Naive thymus-derived CD4-positive, alpha-beta T cell (primary cell): ENCODE measurements at regions of chr13 and their contacts with region 1.

Region 1: DNA sequence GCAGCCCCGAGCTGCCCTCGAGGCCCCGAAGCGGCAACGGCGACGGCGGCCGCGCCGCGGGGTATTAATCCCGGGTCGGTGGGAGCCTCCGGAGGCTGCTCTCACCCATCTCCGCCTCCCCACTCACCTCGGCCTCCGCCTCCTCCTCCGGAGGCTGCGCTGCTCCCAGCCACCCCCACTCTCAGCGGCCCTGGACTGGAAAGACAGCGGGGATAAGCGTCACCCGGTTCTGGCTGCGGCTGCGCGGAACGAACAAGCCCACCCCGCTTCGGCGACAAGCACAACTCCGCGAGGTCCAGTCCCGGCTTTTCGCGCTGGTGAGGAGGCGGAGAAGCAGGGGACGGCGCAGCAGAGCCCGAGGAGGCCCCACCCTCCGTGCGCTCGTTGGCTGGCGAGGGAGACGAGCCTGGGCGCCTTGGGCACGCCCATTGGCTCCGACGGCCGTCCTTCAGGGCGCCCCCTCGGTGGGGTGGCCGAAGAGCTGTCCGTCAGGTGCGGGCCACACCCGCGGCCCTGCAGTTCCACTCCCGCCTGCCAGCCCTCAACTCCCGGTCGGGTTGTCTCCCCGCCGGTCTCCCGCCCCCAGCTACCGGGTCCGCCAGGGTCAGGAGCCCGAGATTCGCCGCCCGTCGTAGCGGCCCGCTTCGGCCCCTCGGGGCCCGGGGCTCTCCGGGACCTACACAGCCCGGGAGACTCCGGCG is at the start of gene ZMYM5:
- DNase-seq: peak; percentile 87 to 96 (median 90)
- ATAC-seq: peak; percentile 89
- H3K4me3 ChIP-seq: peak within 1 kb of the TSS; percentile 80
- H3K4me3 Mint-ChIP-seq: peak within 1 kb of the TSS; percentile 85 to 98 (median 97)
- H3K27ac ChIP-seq: peak within 1 kb of the TSS; percentile 84
- H3K27ac Mint-ChIP-seq: peak within 1 kb of the TSS; percentile 90 to 98 (median 97)
- H3K4me1 ChIP-seq: peaks cover 22 to 23% of the 10 kb centered on the region in 2 donors
- H3K4me1 Mint-ChIP-seq: peaks cover 12 to 43% (median 37%) of the 10 kb centered on the region in 7 donors
- H3K27me3 ChIP-seq: no peaks in the 10 kb centered on the region
- H3K27me3 Mint-ChIP-seq: no peaks in the 10 kb centered on the region
- total RNA-seq, gene ZMYM5: 17.5 to 25.6 (median 24.7) TPM

Region 2: DNA sequence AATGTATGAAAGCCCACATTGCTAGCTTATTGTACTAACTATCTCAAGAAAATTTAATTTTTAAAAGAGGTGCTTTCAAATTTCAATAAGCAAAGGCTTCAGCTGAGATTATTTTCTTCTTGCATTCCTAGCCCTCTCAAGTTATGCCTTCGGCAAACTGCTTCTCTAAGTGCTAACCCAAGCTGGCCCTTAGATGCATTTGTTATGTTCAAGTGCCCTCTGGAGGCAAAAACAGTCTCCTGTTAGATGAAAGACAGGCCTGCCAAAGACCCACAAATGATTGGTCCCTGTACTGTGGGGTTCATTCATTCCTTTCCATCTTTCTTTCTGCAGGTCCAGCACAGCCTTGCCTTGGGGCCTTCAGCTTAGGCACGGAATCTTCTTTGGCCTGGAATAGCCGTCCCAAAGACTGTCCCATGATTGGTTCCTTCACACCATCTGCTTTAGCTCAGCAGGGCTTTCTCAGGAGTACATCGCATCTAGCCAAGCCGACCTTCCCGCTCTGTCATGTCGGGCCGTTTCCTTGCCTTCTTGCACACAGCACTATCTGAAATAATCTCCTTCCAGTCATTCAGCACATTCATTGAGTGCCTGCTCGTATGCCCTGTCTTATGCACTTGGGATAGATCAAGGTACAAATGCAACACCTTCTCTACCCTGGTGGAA is 275.7 kb before region 1 on chr13:
- CTCF ChIA-PET with region 1: no interaction called
- POLR2A ChIA-PET with region 1: no interaction called
- intact Hi-C with region 1: loop called in 1 of 2 experiments (anchors 1 kb)
- DNase-seq: peak in 7 of 9 donors; percentile 14 to 58 (median 42)
- ATAC-seq: peak; percentile 48
- H3K4me3 ChIP-seq: peak overlapping the region; percentile 36
- H3K4me3 Mint-ChIP-seq: peak overlapping the region; percentile 68 to 89 (median 80)
- H3K27ac ChIP-seq: peak overlapping the region; percentile 31
- H3K27ac Mint-ChIP-seq: peak overlapping the region; percentile 76 to 94 (median 86)
- H3K4me1 ChIP-seq: peaks cover 6 to 17% of the 10 kb centered on the region in 2 donors
- H3K4me1 Mint-ChIP-seq: peaks cover 14 to 32% (median 25%) of the 10 kb centered on the region in 7 donors
- H3K27me3 ChIP-seq: no peaks in the 10 kb centered on the region
- H3K27me3 Mint-ChIP-seq: peaks cover 0 to 9% (median 0%) of the 10 kb centered on the region in 5 donors

Region 3: GRCh38 chr13:19713186-19713965 is 150.1 kb before region 1 on chr13:
- CTCF ChIA-PET with region 1: no interaction called
- POLR2A ChIA-PET with region 1: no interaction called
- intact Hi-C with region 1: no loop called
- DNase-seq: no peak
- ATAC-seq: no peak
- H3K4me3 ChIP-seq: no peak overlapping the region
- H3K4me3 Mint-ChIP-seq: no peak overlapping the region
- H3K27ac ChIP-seq: no peak overlapping the region
- H3K27ac Mint-ChIP-seq: peak overlapping the region in 1 of 9 donors; percentile 65
- H3K4me1 ChIP-seq: no peaks in the 10 kb centered on the region
- H3K4me1 Mint-ChIP-seq: peaks cover 0 to 26% (median 12%) of the 10 kb centered on the region in 7 donors
- H3K27me3 ChIP-seq: no peaks in the 10 kb centered on the region
- H3K27me3 Mint-ChIP-seq: no peaks in the 10 kb centered on the region

Region 4: GRCh38 chr13:19766213-19766990 is 97.1 kb before region 1 on chr13:
- CTCF ChIA-PET with region 1: no interaction called
- POLR2A ChIA-PET with region 1: no interaction called
- intact Hi-C with region 1: loop called in 1 of 2 experiments (anchors 5 kb)
- DNase-seq: no peak
- ATAC-seq: no peak
- H3K4me3 ChIP-seq: no peak overlapping the region
- H3K4me3 Mint-ChIP-seq: peak overlapping the region in 8 of 10 donors; percentile 31 to 72 (median 56)
- H3K27ac ChIP-seq: no peak overlapping the region
- H3K27ac Mint-ChIP-seq: peak overlapping the region in 5 of 9 donors; percentile 21 to 77 (median 61)
- H3K4me1 ChIP-seq: peaks cover 10 to 37% of the 10 kb centered on the region in 2 donors
- H3K4me1 Mint-ChIP-seq: peaks cover 23 to 82% (median 53%) of the 10 kb centered on the region in 7 donors
- H3K27me3 ChIP-seq: no peaks in the 10 kb centered on the region
- H3K27me3 Mint-ChIP-seq: no peaks in the 10 kb centered on the region

Region 5: GRCh38 chr13:19822673-19823072 is 40.8 kb before region 1 on chr13:
- CTCF ChIA-PET with region 1: no interaction called
- POLR2A ChIA-PET with region 1: interaction called, 3 read pairs
- intact Hi-C with region 1: loop called in 1 of 2 experiments (anchors 5 kb)
- DNase-seq: no peak
- ATAC-seq: no peak
- H3K4me3 ChIP-seq: no peak overlapping the region
- H3K4me3 Mint-ChIP-seq: no peak overlapping the region
- H3K27ac ChIP-seq: no peak overlapping the region
- H3K27ac Mint-ChIP-seq: no peak overlapping the region
- H3K4me1 ChIP-seq: no peaks in the 10 kb centered on the region
- H3K4me1 Mint-ChIP-seq: peaks cover 0 to 2% (median 0%) of the 10 kb centered on the region in 7 donors
- H3K27me3 ChIP-seq: no peaks in the 10 kb centered on the region
- H3K27me3 Mint-ChIP-seq: no peaks in the 10 kb centered on the region

Region 6: DNA sequence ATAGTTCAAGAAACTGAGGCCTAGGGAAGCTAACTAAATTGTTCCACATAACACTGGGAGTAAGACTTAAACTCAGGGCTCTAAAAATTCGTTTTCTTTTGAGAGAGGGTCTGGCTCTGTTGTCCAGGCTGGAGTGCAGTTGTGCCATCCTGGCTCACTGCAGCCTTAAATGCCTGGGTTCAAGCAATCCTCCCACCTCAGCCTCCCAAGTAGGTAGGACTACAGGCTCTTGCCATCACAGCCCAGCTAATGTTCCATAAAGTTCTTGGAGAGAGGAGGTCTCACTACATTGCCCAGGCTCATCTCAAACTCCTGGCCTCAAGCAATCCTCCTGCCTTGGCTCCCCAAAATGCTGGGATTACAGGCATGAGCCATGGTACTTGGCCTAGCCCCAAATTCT is 10.7 kb before region 1 on chr13:
- CTCF ChIA-PET with region 1: no interaction called
- POLR2A ChIA-PET with region 1: interaction called, 16 read pairs
- intact Hi-C with region 1: loop called in 1 of 2 experiments (anchors 1 kb)
- DNase-seq: no peak
- ATAC-seq: no peak
- H3K4me3 ChIP-seq: no peak overlapping the region
- H3K4me3 Mint-ChIP-seq: peak overlapping the region in 1 of 10 donors; percentile 23
- H3K27ac ChIP-seq: no peak overlapping the region
- H3K27ac Mint-ChIP-seq: peak overlapping the region in 3 of 9 donors; percentile 23 to 58 (median 43)
- H3K4me1 ChIP-seq: peaks cover 0 to 7% of the 10 kb centered on the region in 2 donors
- H3K4me1 Mint-ChIP-seq: peaks cover 11 to 42% (median 26%) of the 10 kb centered on the region in 7 donors
- H3K27me3 ChIP-seq: no peaks in the 10 kb centered on the region
- H3K27me3 Mint-ChIP-seq: no peaks in the 10 kb centered on the region

Region 7: DNA sequence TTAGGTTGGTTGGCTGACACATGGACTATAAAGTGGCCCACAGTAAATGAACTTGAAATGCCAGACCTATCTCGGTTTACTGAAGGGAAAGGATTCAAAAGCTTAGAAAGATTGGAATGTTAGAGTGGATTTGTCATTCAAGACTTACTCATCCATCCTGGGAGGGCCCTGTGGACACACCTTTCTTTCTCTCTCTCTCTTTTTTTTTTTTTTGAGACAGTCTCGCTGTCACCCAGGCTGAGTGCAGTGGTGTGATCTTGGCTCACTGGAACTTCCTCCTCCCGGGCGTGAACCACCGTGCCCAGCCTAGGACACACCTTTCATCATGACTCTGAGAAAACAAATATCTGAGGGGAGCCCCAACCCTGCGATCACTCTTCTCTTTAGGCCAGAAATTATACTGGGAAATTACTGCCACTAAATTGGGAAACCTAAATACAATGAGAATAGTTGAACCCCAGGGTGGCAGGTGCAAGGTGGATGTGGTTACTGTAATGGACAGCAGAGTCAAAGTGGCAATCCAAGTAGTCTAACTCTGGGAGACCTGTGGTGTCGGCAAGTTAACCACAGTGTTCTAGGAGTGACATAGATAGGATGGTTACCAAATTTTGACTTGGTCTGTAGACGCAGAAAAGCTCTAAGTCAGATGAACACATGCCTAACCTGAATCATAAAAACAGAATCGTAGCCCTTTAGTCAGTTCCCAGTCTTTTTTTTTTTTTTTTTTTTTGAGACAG is 47.0 kb after region 1 on chr13:
- CTCF ChIA-PET with region 1: no interaction called
- POLR2A ChIA-PET with region 1: no interaction called
- intact Hi-C with region 1: no loop called
- DNase-seq: no peak
- ATAC-seq: no peak
- H3K4me3 ChIP-seq: no peak overlapping the region
- H3K4me3 Mint-ChIP-seq: no peak overlapping the region
- H3K27ac ChIP-seq: no peak overlapping the region
- H3K27ac Mint-ChIP-seq: no peak overlapping the region
- H3K4me1 ChIP-seq: no peaks in the 10 kb centered on the region
- H3K4me1 Mint-ChIP-seq: no peaks in the 10 kb centered on the region
- H3K27me3 ChIP-seq: no peaks in the 10 kb centered on the region
- H3K27me3 Mint-ChIP-seq: no peaks in the 10 kb centered on the region

Region 8: GRCh38 chr13:20160847-20161274 is 297.4 kb after region 1 on chr13 and contains the start of gene GJA3:
- CTCF ChIA-PET with region 1: no interaction called
- POLR2A ChIA-PET with region 1: no interaction called
- intact Hi-C with region 1: loop called (anchors 2 kb)
- DNase-seq: peak in 8 of 9 donors; percentile 30 to 61 (median 44)
- ATAC-seq: peak; percentile 68
- H3K4me3 ChIP-seq: peak within 1 kb of the TSS; percentile 43
- H3K4me3 Mint-ChIP-seq: peak within 1 kb of the TSS; percentile 78 to 90 (median 86)
- H3K27ac ChIP-seq: no peak within 1 kb of the TSS
- H3K27ac Mint-ChIP-seq: peak within 1 kb of the TSS in 3 of 9 donors; percentile 51 to 72 (median 55)
- H3K4me1 ChIP-seq: peaks cover 5 to 6% of the 10 kb centered on the region in 2 donors
- H3K4me1 Mint-ChIP-seq: peaks cover 0 to 22% (median 13%) of the 10 kb centered on the region in 7 donors
- H3K27me3 ChIP-seq: peaks cover 0 to 29% of the 10 kb centered on the region in 2 donors
- H3K27me3 Mint-ChIP-seq: peaks cover 21 to 73% (median 46%) of the 10 kb centered on the region in 5 donors
- total RNA-seq, gene GJA3: 0.05 to 0.17 (median 0.08) TPM in 3 of 5 experiments, not detected in the others

Region 9: GRCh38 chr13:20231839-20232555 is 368.5 kb after region 1 on chr13 and contains the start of gene GJB6:
- CTCF ChIA-PET with region 1: no interaction called
- POLR2A ChIA-PET with region 1: no interaction called
- intact Hi-C with region 1: no loop called
- DNase-seq: peak in 8 of 9 donors; percentile 4 to 41 (median 24)
- ATAC-seq: peak; percentile 68
- H3K4me3 ChIP-seq: peak within 1 kb of the TSS; percentile 58
- H3K4me3 Mint-ChIP-seq: peak within 1 kb of the TSS; percentile 82 to 95 (median 89)
- H3K27ac ChIP-seq: no peak within 1 kb of the TSS
- H3K27ac Mint-ChIP-seq: peak within 1 kb of the TSS in 8 of 9 donors; percentile 25 to 90 (median 79)
- H3K4me1 ChIP-seq: peaks cover 6 to 17% of the 10 kb centered on the region in 2 donors
- H3K4me1 Mint-ChIP-seq: peaks cover 0 to 20% (median 12%) of the 10 kb centered on the region in 7 donors
- H3K27me3 ChIP-seq: no peaks in the 10 kb centered on the region
- H3K27me3 Mint-ChIP-seq: peaks cover 6 to 54% (median 23%) of the 10 kb centered on the region in 5 donors
- total RNA-seq, gene GJB6: 0.22 to 2.4 (median 1.4) TPM